ENCODE measurements at regions of chr12 and their contacts with region 1.

Region 1: DNA sequence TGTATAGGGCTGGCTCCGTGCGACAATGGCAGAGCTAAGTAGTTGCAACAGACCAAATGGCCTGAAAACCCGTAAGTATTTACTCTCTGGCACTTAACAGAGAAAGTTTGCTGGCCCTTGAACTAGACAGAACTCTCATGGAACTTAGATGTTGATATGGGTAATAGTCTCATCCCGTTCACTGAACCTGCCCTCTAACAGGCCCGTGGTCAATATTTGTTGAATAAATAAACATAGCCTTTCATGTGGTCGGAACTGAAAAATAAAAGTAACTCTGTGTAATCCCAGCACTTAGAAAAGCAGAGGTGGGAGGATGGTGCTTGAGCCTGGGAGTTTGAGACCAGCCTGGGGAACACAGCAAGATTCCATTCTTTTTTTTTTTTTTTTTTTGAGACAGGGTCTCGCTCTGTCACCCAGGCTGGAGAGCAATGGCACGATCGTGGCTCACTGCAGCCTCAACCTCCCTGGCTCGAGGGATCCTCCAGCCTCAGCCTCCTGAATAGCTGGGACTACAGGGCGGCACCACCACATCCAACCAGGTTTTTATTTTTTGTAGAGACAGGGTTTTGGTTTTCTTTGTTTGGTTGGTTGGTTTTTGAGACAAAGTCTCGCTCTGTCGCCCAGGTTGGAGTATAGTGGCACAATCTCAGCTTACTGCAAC is 29.7 kb downstream of the KDM2B start:
- DNase-seq: no peak
- H3K4me3 ChIP-seq: no peak overlapping the region
- CTCF ChIP-seq: no peak

Region 2: GRCh38 chr12:121128970-121129810 is 421.9 kb before region 1 on chr12:
- in situ Hi-C with region 1: no loop called
- DNase-seq: no peak
- H3K4me3 ChIP-seq: no peak overlapping the region
- CTCF ChIP-seq: no peak

Region 3: GRCh38 chr12:121483949-121484348 is 67.2 kb before region 1 on chr12:
- in situ Hi-C with region 1: no loop called
- DNase-seq: no peak
- H3K4me3 ChIP-seq: no peak overlapping the region
- CTCF ChIP-seq: no peak

Region 4: DNA sequence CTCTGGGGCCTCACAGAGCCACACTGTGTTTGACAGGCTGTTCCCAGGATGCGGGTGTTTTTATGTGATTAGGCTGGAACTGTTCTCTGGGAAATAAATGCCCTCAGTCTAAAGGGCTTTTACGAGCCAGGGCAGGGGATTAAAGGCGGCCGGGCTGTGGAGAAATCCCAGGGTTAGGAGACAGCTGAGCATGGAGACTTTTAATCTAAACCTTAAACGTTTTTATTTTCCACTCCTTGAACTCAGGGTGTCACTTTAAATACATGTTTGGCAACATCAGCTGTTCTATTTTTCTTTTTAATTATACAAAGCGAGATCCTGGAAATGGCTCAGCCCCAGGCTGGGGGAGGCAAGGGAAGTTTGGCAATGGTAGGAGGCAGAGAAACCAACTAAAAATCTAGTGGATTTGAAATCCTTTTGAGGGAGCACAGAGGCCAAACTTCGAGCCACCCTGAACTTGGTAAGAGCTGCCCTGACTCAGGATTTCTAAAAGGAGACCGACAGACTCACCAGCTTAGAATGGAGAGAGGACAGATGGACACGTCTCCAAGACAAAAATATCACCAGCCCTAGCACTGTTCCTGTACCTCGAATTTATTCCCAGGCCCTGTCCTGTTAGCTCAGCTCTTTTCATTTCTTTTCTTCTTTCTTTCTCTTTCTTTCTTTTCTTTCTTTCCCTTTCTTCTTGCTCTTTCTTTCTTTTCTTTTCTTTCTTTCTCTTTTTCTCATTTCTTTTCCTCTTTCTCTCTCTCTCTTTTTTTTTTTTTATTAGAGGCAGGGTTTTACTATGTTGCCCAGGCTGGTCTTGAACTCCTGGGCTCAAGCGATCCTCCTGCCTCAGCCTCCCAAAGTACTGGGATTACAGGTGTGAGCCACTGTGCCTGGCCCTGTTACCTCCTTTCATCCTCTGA is 59.4 kb after region 1 on chr12:
- in situ Hi-C with region 1: loop called (anchors 10 kb)
- DNase-seq: no peak
- H3K4me3 ChIP-seq: no peak overlapping the region
- CTCF ChIP-seq: no peak

Measured in astrocyte of the cerebellum (primary cell).